HCT116 (cell line): ENCODE measurements at regions of chr5 and their contacts with region 1.

Region 1: GRCh38 chr5:38515646-38516045 is 40.8 kb downstream of the LIFR start:
- DNase-seq: peak; percentile 4
- ATAC-seq: peak; percentile 78
- H3K4me3 ChIP-seq: no peak overlapping the region
- H3K27ac ChIP-seq: no peak overlapping the region
- H3K4me1 ChIP-seq: no peaks in the 10 kb centered on the region
- H3K27me3 ChIP-seq: no peaks in the 10 kb centered on the region
- CTCF ChIP-seq: peak; percentile 25 to 45 (median 43); a peak in 3 of 6 replicates
- POLR2A ChIP-seq: no peak
- RAD21 ChIP-seq: peak; percentile 32; the same call in 1 of the 2 replicates

Region 2: GRCh38 chr5:38528162-38528703 is 12.6 kb after region 1 on chr5:
- CTCF ChIA-PET with region 1: interaction called, 10 read pairs
- POLR2A ChIA-PET with region 1: no interaction called
- RAD21 ChIA-PET with region 1: no interaction called
- intact Hi-C with region 1: no loop called
- DNase-seq: no peak
- ATAC-seq: no peak
- H3K4me3 ChIP-seq: no peak overlapping the region
- H3K27ac ChIP-seq: no peak overlapping the region
- H3K4me1 ChIP-seq: no peaks in the 10 kb centered on the region
- H3K27me3 ChIP-seq: no peaks in the 10 kb centered on the region
- CTCF ChIP-seq: no peak
- POLR2A ChIP-seq: no peak
- RAD21 ChIP-seq: no peak

Region 3: DNA sequence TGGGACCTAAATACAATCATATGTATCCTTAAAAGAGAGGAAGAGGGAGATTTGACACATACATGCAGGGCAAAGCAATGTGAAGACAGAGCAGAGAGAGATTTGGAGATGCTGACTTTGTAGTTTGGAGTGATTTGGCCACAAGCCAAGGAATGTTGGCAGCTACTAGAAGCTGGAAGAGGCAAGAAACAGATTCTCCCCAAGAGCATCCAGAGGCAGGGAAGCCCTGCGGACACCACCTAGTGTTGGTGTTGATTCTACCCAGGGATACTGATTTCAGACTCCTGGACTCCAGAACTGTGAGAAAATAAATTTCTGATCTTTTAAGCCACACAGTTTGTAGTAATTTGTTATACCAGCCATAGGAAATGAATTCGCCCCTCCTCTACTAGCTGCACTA is 265.3 kb after region 1 on chr5:
- CTCF ChIA-PET with region 1: no interaction called
- POLR2A ChIA-PET with region 1: no interaction called
- RAD21 ChIA-PET with region 1: no interaction called
- intact Hi-C with region 1: no loop called
- DNase-seq: no peak
- ATAC-seq: no peak; the same call in 1 of the 2 replicates
- H3K4me3 ChIP-seq: no peak overlapping the region
- H3K27ac ChIP-seq: no peak overlapping the region
- H3K4me1 ChIP-seq: peaks cover 9 to 17% of the 10 kb centered on the region in 2 experiments
- H3K27me3 ChIP-seq: 0 out of 2 replicates have a peak, but pooled peaks cover 3% of the 10 kb centered on the region
- CTCF ChIP-seq: 0 out of 6 replicates have a peak, but pooled peaks of 1 of the 3 experiments have one; percentile 9
- POLR2A ChIP-seq: no peak
- RAD21 ChIP-seq: no peak

Region 4: GRCh38 chr5:38888041-38888440 is 372.4 kb after region 1 on chr5:
- CTCF ChIA-PET with region 1: no interaction called
- POLR2A ChIA-PET with region 1: no interaction called
- RAD21 ChIA-PET with region 1: no interaction called
- intact Hi-C with region 1: no loop called
- DNase-seq: no peak
- ATAC-seq: no peak
- H3K4me3 ChIP-seq: no peak overlapping the region
- H3K27ac ChIP-seq: no peak overlapping the region
- H3K4me1 ChIP-seq: no peaks in the 10 kb centered on the region
- H3K27me3 ChIP-seq: no peaks in the 10 kb centered on the region
- CTCF ChIP-seq: no peak
- POLR2A ChIP-seq: no peak
- RAD21 ChIP-seq: no peak